ENCODE measurements at regions of chr2 and their contacts with region 1.

Region 1: GRCh38 chr2:70142590-70143313 is 48.1 kb downstream of the C2orf42 start:
- DNase-seq: peak; percentile 98 to 100
- H3K4me3 ChIP-seq: peak overlapping the region; percentile 40
- H3K4me1 ChIP-seq: peaks cover 15% of the 10 kb centered on the region
- H3K27me3 ChIP-seq: no peaks in the 10 kb centered on the region

Region 2: DNA sequence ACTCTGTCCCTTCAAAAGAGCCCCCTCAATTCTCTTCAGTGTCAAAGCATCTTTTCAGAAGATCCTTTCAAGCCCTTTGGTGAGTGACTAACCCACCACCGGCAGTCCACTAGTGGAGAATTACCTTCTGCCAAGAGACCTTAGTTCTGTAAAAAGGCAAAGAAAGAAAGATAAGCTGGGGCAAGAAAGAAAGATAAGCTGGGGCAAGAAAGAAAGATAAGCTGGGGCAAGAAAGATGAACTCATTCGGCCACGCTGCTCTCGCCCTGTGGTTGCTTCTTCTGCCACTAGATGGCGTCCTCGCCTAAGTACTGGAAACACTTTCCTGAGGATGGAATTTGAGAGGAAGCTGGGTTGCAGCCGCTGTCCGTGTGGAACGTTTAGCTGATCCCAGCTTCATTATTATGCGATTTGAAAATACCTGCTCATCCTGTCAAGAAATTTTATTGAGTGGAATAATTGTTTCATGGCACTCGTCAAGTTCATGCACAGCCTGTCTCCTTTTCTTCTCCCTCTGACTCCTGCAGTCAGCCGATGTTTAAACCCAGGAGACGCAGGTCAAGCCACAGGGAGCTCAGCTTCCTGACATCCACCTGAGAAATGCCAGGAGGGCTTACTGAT is 418.1 kb before region 1 on chr2:
- in situ Hi-C with region 1: loop called (anchors 10 kb)
- DNase-seq: peak; percentile 81 to 93
- H3K4me3 ChIP-seq: no peak overlapping the region
- H3K4me1 ChIP-seq: peaks cover under 1% of the 10 kb centered on the region; the same call in 1 of the 2 replicates
- H3K27me3 ChIP-seq: no peaks in the 10 kb centered on the region

Region 3: DNA sequence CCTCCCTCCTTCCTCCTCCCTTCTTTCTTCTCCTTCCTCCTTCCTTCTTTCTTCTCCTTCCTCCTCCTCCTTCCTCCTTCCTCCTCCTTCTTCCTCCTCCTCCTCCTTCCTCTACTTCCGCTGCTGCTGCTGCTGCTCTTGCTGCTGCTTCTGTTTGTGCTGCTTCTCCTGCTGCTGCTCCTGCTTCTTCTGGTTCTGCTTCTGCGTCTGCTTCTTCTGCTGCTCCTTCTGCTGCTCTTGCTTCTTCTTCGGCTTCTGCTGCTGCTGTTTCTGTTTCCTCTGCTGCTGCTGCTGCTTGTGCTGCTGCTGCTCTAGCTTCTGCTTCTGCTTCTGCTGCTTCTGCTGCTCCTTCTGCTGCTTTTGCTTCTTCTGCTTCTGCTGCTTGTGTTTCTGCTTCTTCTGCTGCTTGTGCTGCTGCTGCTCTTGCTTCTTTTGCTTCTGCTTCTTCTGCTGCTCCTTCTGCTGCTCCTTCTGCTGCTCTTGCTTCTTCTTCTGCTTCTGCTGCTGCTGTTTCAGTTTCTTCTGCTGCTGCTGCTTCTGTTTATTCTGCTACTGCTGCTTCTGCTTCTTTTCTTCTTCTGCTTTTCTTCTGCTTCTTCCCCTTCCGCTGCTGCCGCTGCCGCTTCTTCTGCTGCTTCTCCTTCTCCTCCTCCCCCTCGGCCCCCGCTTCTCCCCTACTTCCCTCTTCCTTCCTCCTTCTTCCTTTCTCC is 240.4 kb before region 1 on chr2:
- in situ Hi-C with region 1: loop called (anchors 10 kb)
- DNase-seq: no peak
- H3K4me3 ChIP-seq: no peak overlapping the region
- H3K4me1 ChIP-seq: no peaks in the 10 kb centered on the region
- H3K27me3 ChIP-seq: no peaks in the 10 kb centered on the region

Region 4: GRCh38 chr2:70086838-70087701 is 55.7 kb before region 1 on chr2 and contains the start of gene PCBP1:
- in situ Hi-C with region 1: loop called (anchors 10 kb)
- DNase-seq: peak; percentile 87 to 97
- H3K4me3 ChIP-seq: peak within 1 kb of the TSS; percentile 81
- H3K4me1 ChIP-seq: peaks cover 23% of the 10 kb centered on the region
- H3K27me3 ChIP-seq: no peaks in the 10 kb centered on the region

Measured in HAP-1 (cell line).